ENCODE measurements at regions of chr1 and their contacts with region 1.

Region 1: GRCh38 chr1:23188434-23188884 is 19.8 kb upstream of the LUZP1 start:
- DNase-seq: no peak
- H3K4me3 ChIP-seq: no peak overlapping the region
- H3K4me1 ChIP-seq: no peaks in the 10 kb centered on the region; the same call in 1 of the 2 replicates
- H3K27me3 ChIP-seq: no peaks in the 10 kb centered on the region

Region 2: GRCh38 chr1:23004112-23004511 is 184.3 kb before region 1 on chr1:
- in situ Hi-C with region 1: no loop called
- DNase-seq: no peak
- H3K4me3 ChIP-seq: no peak overlapping the region
- H3K4me1 ChIP-seq: peaks cover 7% of the 10 kb centered on the region
- H3K27me3 ChIP-seq: 0 out of 2 replicates have a peak, but pooled peaks cover 2% of the 10 kb centered on the region

Region 3: GRCh38 chr1:23098463-23099170 is 89.8 kb before region 1 on chr1:
- in situ Hi-C with region 1: loop called (anchors 5 kb)
- DNase-seq: peak; percentile 72 to 80
- H3K4me3 ChIP-seq: no peak overlapping the region
- H3K4me1 ChIP-seq: peaks cover 8% of the 10 kb centered on the region; the same call in 1 of the 2 replicates
- H3K27me3 ChIP-seq: no peaks in the 10 kb centered on the region